Prostate gland (tissue), 2 donors: ENCODE measurements at regions of chr6 and their contacts with region 1.

Region 1: DNA sequence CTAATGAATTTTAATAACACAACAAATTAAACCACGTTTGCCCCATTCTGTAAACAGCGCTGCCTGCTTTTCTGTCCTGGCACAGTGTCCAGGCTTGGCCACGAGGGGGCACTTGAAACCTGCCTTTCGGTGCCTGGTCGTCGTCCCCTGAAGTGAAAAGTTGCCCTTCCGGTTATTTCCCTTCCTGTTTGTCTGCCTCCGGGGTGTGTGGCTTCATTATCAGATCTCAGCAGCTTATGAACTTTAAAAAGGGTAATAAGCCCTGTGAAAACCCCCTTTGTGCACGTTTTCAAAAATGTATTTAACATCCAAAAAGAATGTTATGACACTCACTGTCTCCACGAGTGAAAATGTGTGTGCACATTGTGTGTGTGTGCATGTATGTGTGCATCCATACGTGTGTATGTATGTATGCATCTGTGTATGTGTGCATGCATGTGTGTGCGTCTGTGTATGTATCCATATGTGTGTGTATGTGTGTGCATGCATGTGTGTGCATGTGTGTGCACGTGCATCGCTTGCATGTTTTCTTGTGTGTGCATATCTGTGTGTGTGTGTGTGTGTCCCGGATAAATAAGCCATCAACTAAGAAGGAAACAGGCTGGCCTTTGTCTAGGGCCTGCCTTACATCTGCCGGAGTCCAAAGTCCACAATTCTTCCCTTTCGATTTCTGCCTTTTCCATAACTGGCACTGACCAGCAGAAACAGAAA is 358.4 kb downstream of the THBS2 start:
- DNase-seq: peak; percentile 87
- H3K4me3 ChIP-seq: no peak overlapping the region
- H3K27ac ChIP-seq: no peak overlapping the region
- H3K4me1 ChIP-seq: peaks cover 3% of the 10 kb centered on the region
- H3K27me3 ChIP-seq: no peaks in the 10 kb centered on the region
- CTCF ChIP-seq: peak; percentile 82 to 97 (median 93)
- POLR2A ChIP-seq: no peak

Region 2: DNA sequence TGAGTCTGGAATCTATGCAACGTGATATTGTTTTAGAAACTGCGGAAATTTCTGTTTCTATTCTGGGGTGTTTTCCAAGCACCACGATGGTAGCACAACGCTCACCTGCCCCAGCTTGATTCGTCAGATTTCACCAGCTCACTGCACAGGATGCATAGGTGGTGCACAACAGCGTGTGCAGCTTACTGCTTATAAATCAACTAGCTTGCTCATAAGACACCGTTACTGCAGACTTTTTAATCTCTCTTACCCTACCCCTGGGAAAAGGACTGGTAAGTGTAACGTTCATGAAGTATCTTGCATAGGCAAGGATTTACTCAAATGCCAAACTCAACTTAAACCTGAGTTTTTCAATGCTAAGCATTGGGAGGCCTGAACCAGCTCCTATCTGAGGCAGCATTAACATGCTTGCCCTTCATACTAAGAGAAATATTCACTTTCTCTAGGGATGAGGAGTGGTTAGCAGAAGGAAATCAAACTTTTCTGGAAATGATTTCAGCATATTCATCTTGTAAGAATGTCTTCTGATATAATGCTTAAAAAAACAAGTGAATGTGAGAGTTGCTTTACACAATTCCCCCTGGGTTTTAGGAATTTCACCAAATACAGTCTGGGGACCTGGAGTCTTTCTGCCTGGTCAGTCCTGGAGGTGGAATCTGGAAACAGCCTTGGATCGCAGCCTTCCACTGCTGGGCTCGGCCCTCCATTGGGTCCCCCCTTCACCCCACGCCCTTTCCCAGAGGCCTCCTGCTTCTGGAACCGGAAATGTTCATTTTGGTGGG is 676.3 kb before region 1 on chr6:
- intact Hi-C with region 1: no loop called
- DNase-seq: no peak
- H3K4me3 ChIP-seq: no peak overlapping the region
- H3K27ac ChIP-seq: no peak overlapping the region
- H3K4me1 ChIP-seq: no peaks in the 10 kb centered on the region
- H3K27me3 ChIP-seq: no peaks in the 10 kb centered on the region
- CTCF ChIP-seq: no peak
- POLR2A ChIP-seq: no peak

Region 3: GRCh38 chr6:168607272-168608112 is 287.8 kb before region 1 on chr6:
- intact Hi-C with region 1: no loop called
- DNase-seq: no peak
- H3K4me3 ChIP-seq: no peak overlapping the region
- H3K27ac ChIP-seq: no peak overlapping the region
- H3K4me1 ChIP-seq: no peaks in the 10 kb centered on the region
- H3K27me3 ChIP-seq: no peaks in the 10 kb centered on the region
- CTCF ChIP-seq: no peak
- POLR2A ChIP-seq: no peak

Region 4: DNA sequence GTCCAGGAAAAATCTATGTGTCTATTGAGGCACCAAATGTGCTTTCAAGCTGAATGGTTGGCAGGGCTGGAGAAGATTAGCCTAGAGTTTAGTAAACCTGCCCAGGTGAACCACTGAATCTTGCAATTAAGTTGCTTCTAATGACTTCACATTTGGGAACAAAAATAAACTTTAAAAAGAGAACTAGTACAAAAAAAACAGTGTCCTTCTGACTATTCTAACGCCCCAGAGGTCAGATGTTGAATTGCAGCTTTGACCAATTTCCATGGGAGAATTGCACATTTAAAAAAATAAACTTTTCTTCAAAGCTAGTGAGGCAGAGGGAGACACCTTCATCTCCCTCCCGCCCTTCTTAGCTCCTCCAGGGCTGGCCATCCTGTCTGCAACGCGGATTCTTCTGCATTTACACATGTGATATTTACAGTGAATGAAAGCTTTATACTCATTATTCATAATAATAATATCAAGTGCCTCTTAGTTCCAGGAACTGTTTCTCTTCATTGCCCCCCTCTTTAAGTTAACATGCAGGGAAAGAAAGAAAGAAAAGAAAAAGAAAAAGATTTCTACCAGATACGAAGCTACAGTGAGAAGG is 184.1 kb before region 1 on chr6:
- intact Hi-C with region 1: no loop called
- DNase-seq: no peak
- H3K4me3 ChIP-seq: no peak overlapping the region
- H3K27ac ChIP-seq: no peak overlapping the region
- H3K4me1 ChIP-seq: no peaks in the 10 kb centered on the region
- H3K27me3 ChIP-seq: no peaks in the 10 kb centered on the region
- CTCF ChIP-seq: peak in 3 of 4 experiments; percentile 19 to 36 (median 26)
- POLR2A ChIP-seq: no peak

Region 5: GRCh38 chr6:169518441-169518840 is 623.2 kb after region 1 on chr6:
- intact Hi-C with region 1: loop called (anchors 5 kb)
- DNase-seq: no peak
- H3K4me3 ChIP-seq: no peak overlapping the region
- H3K27ac ChIP-seq: no peak overlapping the region
- H3K4me1 ChIP-seq: no peaks in the 10 kb centered on the region
- H3K27me3 ChIP-seq: no peaks in the 10 kb centered on the region
- CTCF ChIP-seq: no peak
- POLR2A ChIP-seq: no peak